A549 (cell line): ENCODE measurements at regions of chr2 and their contacts with region 1.

Region 1: DNA sequence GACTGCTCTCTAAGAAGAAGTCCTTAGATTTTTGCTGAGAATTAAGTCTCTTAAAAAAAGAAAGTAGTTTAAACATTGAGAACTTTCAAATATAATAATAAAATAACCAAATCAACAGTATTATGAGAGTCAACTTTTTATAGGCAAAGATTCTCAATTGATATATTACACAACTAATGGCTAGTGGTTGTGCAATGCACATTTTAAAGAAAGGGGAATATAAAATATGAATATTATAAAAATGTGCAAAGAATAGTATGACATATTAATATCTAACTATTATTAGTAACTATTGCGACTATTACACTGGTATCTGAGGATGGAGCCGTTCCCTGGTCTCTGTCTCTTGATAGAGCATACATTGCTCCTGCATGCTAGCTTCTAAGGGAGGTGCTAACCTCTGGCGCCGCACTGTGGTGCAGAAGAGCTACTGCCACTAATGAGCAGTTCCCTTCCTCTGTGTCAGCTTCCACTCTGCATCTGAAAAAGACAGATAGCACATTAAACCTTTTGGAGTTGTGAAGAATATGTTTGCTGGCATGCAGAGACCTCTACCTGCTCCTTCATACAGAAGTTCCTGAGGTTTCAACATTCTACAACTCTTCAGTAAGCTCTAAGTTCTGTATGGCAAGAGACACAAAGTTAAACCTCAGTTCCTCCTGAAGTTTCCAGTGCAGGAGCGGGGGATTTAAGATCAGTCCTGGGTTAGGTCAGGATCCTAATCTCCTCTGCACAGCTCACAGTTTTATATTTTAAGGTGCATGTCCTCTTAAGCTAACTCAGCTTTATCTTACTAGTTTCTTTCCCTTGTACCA is 3.5 kb upstream of the SLC9A2 start:
- DNase-seq: peak; percentile 75
- ATAC-seq: peak; percentile 58 to 87; a peak in 4 of 6 replicates
- H3K4me3 ChIP-seq: no peak overlapping the region
- H3K27ac ChIP-seq: no peak overlapping the region
- H3K4me1 ChIP-seq: peaks cover 7% of the 10 kb centered on the region; the same call in 1 of the 3 replicates
- CTCF ChIP-seq: peak; percentile 86
- EP300 ChIP-seq: no peak
- POLR2A ChIP-seq: no peak
- RAD21 ChIP-seq: peak; percentile 85 to 86

Region 2: GRCh38 chr2:102442967-102443828 is 172.6 kb before region 1 on chr2:
- CTCF ChIA-PET with region 1: interaction called, 10 read pairs
- POLR2A ChIA-PET with region 1: no interaction called
- DNase-seq: peak; percentile 13 to 43
- ATAC-seq: peak; percentile 81 to 82
- H3K4me3 ChIP-seq: no peak overlapping the region
- H3K27ac ChIP-seq: no peak overlapping the region
- H3K4me1 ChIP-seq: no peaks in the 10 kb centered on the region
- CTCF ChIP-seq: peak; percentile 80
- EP300 ChIP-seq: no peak
- POLR2A ChIP-seq: no peak
- RAD21 ChIP-seq: peak; percentile 72 to 76

Region 3: DNA sequence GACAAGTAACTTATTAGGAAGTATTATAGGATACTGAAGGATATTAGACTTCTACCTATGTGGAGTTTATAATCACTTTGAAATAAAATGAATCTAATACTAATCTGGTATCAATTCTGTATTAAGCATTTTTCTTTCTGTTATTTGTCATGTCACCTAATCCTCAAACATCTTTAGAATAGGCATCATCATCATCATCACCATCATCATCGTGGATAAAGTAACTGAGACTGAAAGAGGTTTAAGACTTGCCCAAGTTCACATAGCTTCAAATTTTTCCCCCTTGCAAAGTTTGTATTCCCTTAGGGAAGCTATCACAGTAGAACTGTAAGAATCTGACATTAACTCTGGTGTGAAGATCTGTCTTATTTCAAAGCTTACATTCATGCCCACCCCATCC is 148.3 kb before region 1 on chr2:
- CTCF ChIA-PET with region 1: interaction called, 95 read pairs
- POLR2A ChIA-PET with region 1: no interaction called
- DNase-seq: no peak
- ATAC-seq: no peak
- H3K4me3 ChIP-seq: no peak overlapping the region
- H3K27ac ChIP-seq: no peak overlapping the region
- H3K4me1 ChIP-seq: no peaks in the 10 kb centered on the region
- CTCF ChIP-seq: no peak
- EP300 ChIP-seq: no peak
- POLR2A ChIP-seq: no peak
- RAD21 ChIP-seq: no peak

Region 4: GRCh38 chr2:102478686-102479470 is 137.0 kb before region 1 on chr2:
- CTCF ChIA-PET with region 1: interaction called, 95 read pairs
- POLR2A ChIA-PET with region 1: no interaction called
- DNase-seq: no peak
- ATAC-seq: no peak
- H3K4me3 ChIP-seq: no peak overlapping the region
- H3K27ac ChIP-seq: no peak overlapping the region
- H3K4me1 ChIP-seq: no peaks in the 10 kb centered on the region
- CTCF ChIP-seq: no peak
- EP300 ChIP-seq: no peak
- POLR2A ChIP-seq: no peak
- RAD21 ChIP-seq: no peak

Region 5: GRCh38 chr2:102632380-102633175 is 16.7 kb after region 1 on chr2:
- CTCF ChIA-PET with region 1: interaction called, 10 read pairs
- POLR2A ChIA-PET with region 1: no interaction called
- DNase-seq: no peak
- ATAC-seq: no peak
- H3K4me3 ChIP-seq: no peak overlapping the region
- H3K27ac ChIP-seq: no peak overlapping the region
- H3K4me1 ChIP-seq: no peaks in the 10 kb centered on the region
- CTCF ChIP-seq: no peak
- EP300 ChIP-seq: no peak
- POLR2A ChIP-seq: no peak
- RAD21 ChIP-seq: no peak

Region 6: DNA sequence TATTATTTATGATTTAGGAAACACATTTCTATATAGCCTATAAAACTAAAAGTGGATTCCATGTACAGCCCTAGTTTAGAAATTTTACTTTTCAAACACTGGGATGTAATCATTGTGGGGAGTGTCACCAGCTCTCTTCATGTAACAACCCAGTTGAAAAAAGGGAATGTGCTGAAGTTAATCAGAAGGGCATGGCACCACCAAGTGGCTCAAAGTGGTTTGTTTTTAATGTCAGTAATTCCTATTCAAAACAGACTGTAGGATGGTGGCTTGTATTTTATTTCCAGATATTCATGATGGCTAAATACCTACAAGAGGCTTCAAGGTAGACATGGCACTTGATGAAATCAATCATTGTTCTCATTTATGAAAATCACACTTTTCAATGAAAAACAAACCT is 87.9 kb after region 1 on chr2:
- CTCF ChIA-PET with region 1: interaction called, 12 read pairs
- POLR2A ChIA-PET with region 1: no interaction called
- DNase-seq: peak; percentile 47 to 55
- ATAC-seq: peak; percentile 83 to 93
- H3K4me3 ChIP-seq: no peak overlapping the region
- H3K27ac ChIP-seq: no peak overlapping the region
- H3K4me1 ChIP-seq: peaks cover 9% of the 10 kb centered on the region
- CTCF ChIP-seq: peak; percentile 72
- EP300 ChIP-seq: no peak
- POLR2A ChIP-seq: no peak
- RAD21 ChIP-seq: peak; percentile 76 to 78

Region 7: GRCh38 chr2:102782933-102783332 is 167.1 kb after region 1 on chr2:
- CTCF ChIA-PET with region 1: no interaction called
- POLR2A ChIA-PET with region 1: no interaction called
- DNase-seq: no peak
- ATAC-seq: no peak
- H3K4me3 ChIP-seq: no peak overlapping the region
- H3K27ac ChIP-seq: no peak overlapping the region
- H3K4me1 ChIP-seq: no peaks in the 10 kb centered on the region
- CTCF ChIP-seq: no peak
- EP300 ChIP-seq: no peak
- POLR2A ChIP-seq: no peak
- RAD21 ChIP-seq: no peak

Region 8: GRCh38 chr2:102891296-102891695 is 275.5 kb after region 1 on chr2:
- CTCF ChIA-PET with region 1: no interaction called
- POLR2A ChIA-PET with region 1: no interaction called
- DNase-seq: no peak
- ATAC-seq: no peak
- H3K4me3 ChIP-seq: no peak overlapping the region
- H3K27ac ChIP-seq: no peak overlapping the region
- H3K4me1 ChIP-seq: no peaks in the 10 kb centered on the region
- CTCF ChIP-seq: no peak
- EP300 ChIP-seq: no peak
- POLR2A ChIP-seq: no peak
- RAD21 ChIP-seq: no peak